MCF 10A (cell line): ENCODE measurements at regions of chr1 and their contacts with region 1.

Region 1: GRCh38 chr1:32107742-32108661 is at the start of gene KPNA6:
- DNase-seq: peak; percentile 98
- H3K4me3 Mint-ChIP-seq: peak within 1 kb of the TSS; percentile 98
- H3K27ac Mint-ChIP-seq: peak within 1 kb of the TSS; percentile 97
- H3K4me1 Mint-ChIP-seq: peaks cover 11% of the 10 kb centered on the region
- H3K27me3 Mint-ChIP-seq: no peaks in the 10 kb centered on the region
- CTCF ChIP-seq: no peak
- total RNA-seq, gene KPNA6: 86.9 and 109 TPM in 2 replicates

Region 2: DNA sequence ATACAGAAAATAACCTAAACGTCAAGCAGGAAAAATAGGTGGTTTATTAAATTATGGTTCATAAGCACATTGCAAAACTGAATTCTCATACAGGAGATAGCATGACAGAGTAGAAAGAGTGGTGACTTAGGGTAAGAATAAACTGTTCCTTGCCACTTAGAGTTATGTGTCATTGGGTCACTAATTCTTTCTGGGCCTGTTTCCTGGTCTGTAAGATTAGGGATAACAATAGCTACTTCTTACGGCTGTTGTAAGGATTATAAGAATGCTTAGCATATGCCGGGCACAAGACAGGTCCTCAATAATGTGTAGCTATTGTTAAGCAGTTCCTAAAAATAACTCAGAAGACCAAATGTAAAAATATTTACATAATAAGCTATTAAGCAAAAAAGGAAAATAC is 835.6 kb before region 1 on chr1:
- CTCF ChIA-PET with region 1: no interaction called
- POLR2A ChIA-PET with region 1: no interaction called
- intact Hi-C with region 1: no loop called
- DNase-seq: no peak
- H3K4me3 Mint-ChIP-seq: no peak overlapping the region
- H3K27ac Mint-ChIP-seq: no peak overlapping the region
- H3K4me1 Mint-ChIP-seq: peaks cover 7% of the 10 kb centered on the region
- H3K27me3 Mint-ChIP-seq: no peaks in the 10 kb centered on the region
- CTCF ChIP-seq: no peak

Region 3: GRCh38 chr1:32063261-32063681 is 44.7 kb before region 1 on chr1:
- CTCF ChIA-PET with region 1: no interaction called
- POLR2A ChIA-PET with region 1: interaction called, 14 read pairs
- intact Hi-C with region 1: no loop called
- DNase-seq: peak; percentile 59
- H3K4me3 Mint-ChIP-seq: no peak overlapping the region
- H3K27ac Mint-ChIP-seq: peak overlapping the region; percentile 55
- H3K4me1 Mint-ChIP-seq: peaks cover 18% of the 10 kb centered on the region
- H3K27me3 Mint-ChIP-seq: no peaks in the 10 kb centered on the region
- CTCF ChIP-seq: peak; percentile 47

Region 4: GRCh38 chr1:32122151-32122550 is 14.1 kb after region 1 on chr1:
- CTCF ChIA-PET with region 1: interaction called, 12 read pairs
- POLR2A ChIA-PET with region 1: interaction called, 22 read pairs
- intact Hi-C with region 1: no loop called
- DNase-seq: no peak
- H3K4me3 Mint-ChIP-seq: no peak overlapping the region
- H3K27ac Mint-ChIP-seq: peak overlapping the region; percentile 16
- H3K4me1 Mint-ChIP-seq: peaks cover 14% of the 10 kb centered on the region
- H3K27me3 Mint-ChIP-seq: no peaks in the 10 kb centered on the region
- CTCF ChIP-seq: no peak

Region 5: GRCh38 chr1:32138943-32139342 is 30.9 kb after region 1 on chr1:
- CTCF ChIA-PET with region 1: interaction called, 8 read pairs
- POLR2A ChIA-PET with region 1: interaction called, 20 read pairs
- intact Hi-C with region 1: no loop called
- DNase-seq: peak; percentile 30
- H3K4me3 Mint-ChIP-seq: no peak overlapping the region
- H3K27ac Mint-ChIP-seq: peak overlapping the region; percentile 18
- H3K4me1 Mint-ChIP-seq: peaks cover 40% of the 10 kb centered on the region
- H3K27me3 Mint-ChIP-seq: no peaks in the 10 kb centered on the region
- CTCF ChIP-seq: no peak